Mammary epithelial cell (primary cell): ENCODE measurements at regions of chr1 and their contacts with region 1.

Region 1: DNA sequence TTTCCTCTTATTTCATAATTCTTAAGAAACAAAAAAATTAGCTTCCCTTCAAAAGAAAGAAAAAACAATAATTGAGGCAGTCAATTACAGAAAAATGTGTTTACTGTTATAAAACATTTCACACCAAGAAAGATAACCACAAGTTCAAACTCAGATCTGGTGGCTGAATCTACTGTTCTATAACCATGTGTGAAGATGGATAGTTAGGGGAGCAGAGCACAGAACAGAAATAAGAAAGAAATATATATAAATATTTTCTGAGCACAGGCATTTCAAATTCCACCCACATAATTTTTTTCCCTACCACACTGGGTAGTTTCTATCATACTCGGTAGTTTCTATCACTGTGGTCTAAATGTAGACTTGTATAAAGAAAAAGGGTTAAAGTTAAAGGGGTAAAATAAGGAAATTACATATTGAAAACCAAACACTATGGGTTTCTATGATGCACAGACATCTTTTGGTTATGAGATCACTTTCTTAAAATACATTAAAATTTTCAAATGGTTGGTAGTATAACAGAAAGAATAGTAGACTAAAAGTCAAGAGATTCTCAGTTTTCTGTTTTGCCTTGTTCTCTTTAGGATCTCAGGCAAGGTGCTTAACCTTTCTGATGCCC is 10.8 kb downstream of the LYST start:
- DNase-seq: no peak
- H3K4me3 ChIP-seq: no peak overlapping the region
- H3K27ac ChIP-seq: no peak overlapping the region
- H3K4me1 ChIP-seq: no peaks in the 10 kb centered on the region
- H3K27me3 ChIP-seq: no peaks in the 10 kb centered on the region
- CTCF ChIP-seq: no peak

Region 2: DNA sequence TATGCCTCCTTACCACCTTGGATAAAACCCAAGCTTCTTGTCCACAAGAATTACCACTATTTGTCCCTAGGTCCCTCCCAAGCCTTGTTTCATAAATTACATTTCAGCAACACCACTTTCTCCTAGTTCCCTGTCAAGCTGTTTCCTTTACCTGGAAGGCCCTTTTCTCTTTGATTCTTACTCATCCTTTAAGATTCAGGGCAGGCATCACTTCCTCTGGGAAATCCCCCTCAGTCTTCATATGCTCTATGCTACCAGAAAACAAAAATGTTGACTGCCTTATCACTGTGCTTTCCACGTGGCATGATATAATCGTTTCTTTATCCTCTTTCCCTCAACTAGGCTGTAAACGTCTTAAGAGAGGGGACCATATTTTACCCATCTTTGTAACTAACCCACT is 92.0 kb before region 1 on chr1:
- CTCF ChIA-PET with region 1: no interaction called
- dilution Hi-C with region 1: loop called (anchors 5 kb)
- in situ Hi-C with region 1: no loop called
- intact Hi-C with region 1: no loop called
- DNase-seq: no peak
- H3K4me3 ChIP-seq: no peak overlapping the region
- H3K27ac ChIP-seq: no peak overlapping the region
- H3K4me1 ChIP-seq: peaks cover 4% of the 10 kb centered on the region
- H3K27me3 ChIP-seq: no peaks in the 10 kb centered on the region
- CTCF ChIP-seq: no peak